ENCODE measurements at regions of chr1 and their contacts with region 1.

Region 1: DNA sequence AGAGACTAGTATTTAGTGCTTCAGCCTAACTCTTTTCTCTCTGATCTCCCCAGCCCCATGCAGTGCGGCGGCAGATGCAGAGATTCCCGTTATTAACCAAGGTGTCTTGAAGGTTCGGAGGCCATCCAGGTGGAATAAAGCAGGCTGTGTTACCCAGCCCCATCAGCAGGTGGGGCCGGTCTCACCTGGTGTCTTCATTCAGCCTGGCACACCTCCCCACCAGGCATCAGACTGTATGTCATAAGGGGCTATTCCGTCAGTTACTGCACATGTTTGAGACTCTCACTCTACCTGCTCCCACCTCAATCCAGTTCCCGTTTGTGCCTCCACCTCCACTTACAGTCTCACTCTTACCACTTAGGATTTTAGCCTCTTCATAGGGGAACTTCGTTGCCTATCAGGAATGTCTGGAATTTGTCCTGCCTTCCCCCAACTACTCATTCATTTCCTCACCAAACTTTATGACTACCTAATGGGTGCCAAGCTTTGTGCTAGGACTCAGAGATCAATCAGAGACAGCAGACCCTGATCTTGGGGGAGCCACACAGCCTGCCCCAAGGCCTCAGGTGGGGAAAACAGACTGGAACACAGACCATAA is 170.2 kb downstream of the PLPP3 start:
- DNase-seq: no peak
- H3K4me3 ChIP-seq: no peak overlapping the region
- H3K4me3 Mint-ChIP-seq: peak overlapping the region in 1 of 2 donors; percentile 6
- H3K27ac ChIP-seq: no peak overlapping the region
- H3K27ac Mint-ChIP-seq: no peak overlapping the region
- H3K4me1 ChIP-seq: no peaks in the 10 kb centered on the region
- H3K4me1 Mint-ChIP-seq: no peaks in the 10 kb centered on the region
- H3K27me3 ChIP-seq: no peaks in the 10 kb centered on the region
- H3K27me3 Mint-ChIP-seq: peaks cover 5 to 9% (median 7%) of the 10 kb centered on the region in 3 donors
- CTCF ChIP-seq: peak; percentile 31

Region 2: DNA sequence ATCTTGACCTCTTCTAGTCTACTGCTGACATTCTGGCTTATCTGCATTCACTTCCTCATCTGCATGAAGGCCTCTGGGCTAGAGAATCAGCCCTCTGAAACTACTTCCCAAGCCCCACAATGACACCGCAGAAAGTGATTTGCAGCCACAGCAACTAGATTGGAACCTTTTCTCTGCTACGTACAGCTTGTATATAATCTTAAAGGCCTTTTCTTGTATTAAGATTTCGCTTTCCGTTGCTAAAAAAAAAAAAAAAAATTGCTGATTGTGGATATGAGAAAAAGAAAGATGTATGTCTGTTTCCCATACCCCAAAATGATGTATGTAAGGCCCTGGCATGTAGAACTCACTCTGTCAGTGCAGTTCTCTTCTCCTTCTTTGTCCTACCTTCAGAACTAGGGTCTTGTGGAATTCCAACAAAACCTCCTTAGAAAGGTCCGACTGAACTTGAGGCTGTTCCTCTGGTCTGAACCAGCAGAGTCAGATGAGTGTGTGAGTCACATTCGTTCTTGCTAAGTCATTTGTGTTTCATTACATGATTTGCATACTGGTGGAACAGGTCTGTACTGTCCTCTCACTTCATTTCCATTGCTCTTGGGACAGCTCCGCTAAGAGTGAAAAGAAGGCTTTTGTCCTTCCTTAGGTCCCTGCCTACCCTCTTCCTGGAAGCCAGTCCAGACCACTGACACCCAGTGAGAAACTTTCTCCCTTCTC is 107.5 kb after region 1 on chr1:
- intact Hi-C with region 1: no loop called
- DNase-seq: peak; percentile 82 to 96 (median 94)
- H3K4me3 ChIP-seq: peak overlapping the region; percentile 7 to 55 (median 48)
- H3K4me3 Mint-ChIP-seq: peak overlapping the region; percentile 75 to 89
- H3K27ac ChIP-seq: peak overlapping the region; percentile 62 to 92
- H3K27ac Mint-ChIP-seq: peak overlapping the region; percentile 98 to 100 (median 99)
- H3K4me1 ChIP-seq: peaks cover 31 to 35% of the 10 kb centered on the region in 2 donors
- H3K4me1 Mint-ChIP-seq: peaks cover 41% of the 10 kb centered on the region
- H3K27me3 ChIP-seq: peaks cover 8 to 9% of the 10 kb centered on the region in 2 donors
- H3K27me3 Mint-ChIP-seq: peaks cover 12 to 29% (median 22%) of the 10 kb centered on the region in 3 donors
- CTCF ChIP-seq: no peak

Region 3: GRCh38 chr1:56578963-56579875 is 170.0 kb after region 1 on chr1 and contains the start of gene PLPP3:
- intact Hi-C with region 1: loop called (anchors 5 to 10 kb)
- DNase-seq: peak; percentile 36 to 50 (median 38)
- H3K4me3 ChIP-seq: peak within 1 kb of the TSS; percentile 50 to 90 (median 83)
- H3K4me3 Mint-ChIP-seq: peak within 1 kb of the TSS; percentile 92 to 96
- H3K27ac ChIP-seq: no peak within 1 kb of the TSS
- H3K27ac Mint-ChIP-seq: peak within 1 kb of the TSS in 3 of 7 donors; percentile 20 to 82 (median 54)
- H3K4me1 ChIP-seq: peaks cover 6 to 23% of the 10 kb centered on the region in 2 donors
- H3K4me1 Mint-ChIP-seq: peaks cover 33% of the 10 kb centered on the region
- H3K27me3 ChIP-seq: peaks cover 15 to 30% of the 10 kb centered on the region in 2 donors
- H3K27me3 Mint-ChIP-seq: peaks cover 26 to 37% (median 29%) of the 10 kb centered on the region in 3 donors
- CTCF ChIP-seq: peak; percentile 44
- polyA plus RNA-seq, gene PLPP3: 0.21 to 0.32 TPM in 2 of 3 donors, not detected in the other